Activated B cell treated with CpG ODN at 0.5 μM for 24 hours (primary cell): ENCODE measurements at regions of chr6 and their contacts with region 1.

Region 1: GRCh38 chr6:33147807-33148666 is 44.2 kb downstream of the COL11A2 start:
- DNase-seq: no peak
- ATAC-seq: no peak
- H3K4me3 Mint-ChIP-seq: no peak overlapping the region
- H3K27ac Mint-ChIP-seq: no peak overlapping the region
- H3K4me1 Mint-ChIP-seq: peaks cover 14% of the 10 kb centered on the region
- H3K27me3 Mint-ChIP-seq: peaks cover 6% of the 10 kb centered on the region
- CTCF ChIP-seq: peak; percentile 29

Region 2: DNA sequence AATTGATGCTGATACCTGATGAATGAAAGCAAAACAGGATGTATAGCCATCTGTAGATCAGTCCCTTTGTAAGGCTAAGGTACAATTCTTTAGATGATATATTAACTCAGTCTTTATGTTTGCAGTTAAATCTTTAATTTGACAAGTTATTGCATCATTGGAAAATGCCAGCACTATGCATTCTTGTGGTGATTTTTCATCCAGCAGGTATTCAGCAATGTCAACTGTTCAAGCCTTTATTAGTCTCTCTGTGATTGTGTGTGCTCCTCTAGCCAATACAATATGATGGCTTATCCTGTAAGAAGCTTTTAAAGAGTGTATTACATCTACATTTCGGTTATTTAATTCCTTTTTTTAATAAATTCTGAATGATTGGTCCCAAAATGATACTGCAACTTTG is 241.5 kb before region 1 on chr6:
- CTCF ChIA-PET with region 1: no interaction called
- POLR2A ChIA-PET with region 1: no interaction called
- intact Hi-C with region 1: no loop called
- DNase-seq: no peak
- ATAC-seq: no peak
- H3K4me3 Mint-ChIP-seq: no peak overlapping the region
- H3K27ac Mint-ChIP-seq: no peak overlapping the region
- H3K4me1 Mint-ChIP-seq: peaks cover 21% of the 10 kb centered on the region
- H3K27me3 Mint-ChIP-seq: no peaks in the 10 kb centered on the region
- CTCF ChIP-seq: no peak

Region 3: GRCh38 chr6:33000055-33000454 is 148.0 kb before region 1 on chr6:
- CTCF ChIA-PET with region 1: interaction called, 58 read pairs
- POLR2A ChIA-PET with region 1: interaction called, 4 read pairs
- intact Hi-C with region 1: loop called (anchors 1 kb)
- DNase-seq: no peak
- ATAC-seq: peak; percentile 92
- H3K4me3 Mint-ChIP-seq: peak overlapping the region; percentile 47
- H3K27ac Mint-ChIP-seq: peak overlapping the region; percentile 79
- H3K4me1 Mint-ChIP-seq: peaks cover 12% of the 10 kb centered on the region
- H3K27me3 Mint-ChIP-seq: no peaks in the 10 kb centered on the region
- CTCF ChIP-seq: no peak

Region 4: DNA sequence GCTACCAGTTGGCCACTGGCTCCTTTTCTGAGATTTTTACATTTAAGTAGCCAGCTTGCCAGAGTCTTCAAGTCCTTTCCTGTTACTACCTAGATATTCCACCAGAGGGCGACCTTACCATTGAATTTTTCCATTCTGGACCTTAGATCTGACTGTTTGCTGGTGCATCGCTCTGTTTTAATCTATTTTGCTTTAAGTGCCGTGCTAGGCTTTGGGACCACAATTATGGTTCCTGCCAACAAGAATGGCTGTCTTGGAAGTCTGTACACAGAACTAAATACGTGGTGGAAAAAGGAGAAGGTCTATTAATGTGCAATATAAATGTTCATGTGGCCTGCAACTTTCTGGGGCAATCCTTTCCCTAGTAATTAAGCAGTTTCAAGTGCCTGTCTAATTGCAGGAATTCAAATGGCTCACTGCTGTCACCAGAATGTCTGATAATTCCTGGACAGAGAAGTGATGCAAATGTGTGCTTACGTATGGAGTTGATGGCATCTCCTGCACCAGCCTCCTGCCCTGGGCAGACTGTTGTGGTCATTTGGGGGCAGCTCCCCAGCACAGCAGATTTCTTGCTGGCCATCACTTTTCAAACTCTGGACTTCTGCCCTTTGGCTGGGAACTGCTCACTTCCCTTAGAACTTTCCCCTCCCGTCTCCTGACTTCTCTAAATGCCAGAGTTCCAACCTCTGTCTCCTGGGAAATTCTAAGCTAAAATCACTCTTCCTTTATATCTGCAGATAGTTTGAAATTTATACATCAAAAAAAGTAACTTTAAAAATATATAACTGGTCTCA is 133.0 kb before region 1 on chr6:
- CTCF ChIA-PET with region 1: interaction called, 47 read pairs
- POLR2A ChIA-PET with region 1: interaction called, 4 read pairs
- intact Hi-C with region 1: loop called (anchors 1 kb)
- DNase-seq: no peak
- ATAC-seq: peak; percentile 34
- H3K4me3 Mint-ChIP-seq: peak overlapping the region; percentile 71
- H3K27ac Mint-ChIP-seq: peak overlapping the region; percentile 98
- H3K4me1 Mint-ChIP-seq: peaks cover 69% of the 10 kb centered on the region
- H3K27me3 Mint-ChIP-seq: no peaks in the 10 kb centered on the region
- CTCF ChIP-seq: no peak

Region 5: DNA sequence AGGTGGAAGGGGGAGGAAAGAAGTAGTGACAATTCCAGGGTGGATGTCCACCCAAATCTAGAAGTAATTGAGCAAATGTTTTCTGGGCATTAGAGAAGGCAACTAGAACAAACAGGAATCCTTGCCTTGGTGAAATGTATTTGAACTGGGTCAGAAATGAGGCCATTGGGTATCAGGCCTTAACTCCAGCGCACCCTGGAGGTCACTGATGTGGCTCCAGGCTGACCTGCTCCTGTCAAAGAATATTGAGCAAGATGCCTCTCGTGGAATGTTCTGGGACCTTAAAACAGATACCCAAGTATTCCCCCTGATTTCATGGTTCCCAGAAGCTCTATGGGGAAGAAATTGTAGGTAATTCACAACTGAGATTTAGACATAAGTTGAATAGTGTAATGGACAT is 65.3 kb before region 1 on chr6:
- CTCF ChIA-PET with region 1: interaction called, 3 read pairs
- POLR2A ChIA-PET with region 1: no interaction called
- intact Hi-C with region 1: loop called (anchors 5 kb)
- DNase-seq: no peak
- ATAC-seq: peak; percentile 54
- H3K4me3 Mint-ChIP-seq: peak overlapping the region; percentile 89
- H3K27ac Mint-ChIP-seq: peak overlapping the region; percentile 78
- H3K4me1 Mint-ChIP-seq: peaks cover 74% of the 10 kb centered on the region
- H3K27me3 Mint-ChIP-seq: no peaks in the 10 kb centered on the region
- CTCF ChIP-seq: no peak

Region 6: GRCh38 chr6:33118525-33119123 is 29.4 kb before region 1 on chr6:
- CTCF ChIA-PET with region 1: interaction called, 7 read pairs
- POLR2A ChIA-PET with region 1: no interaction called
- intact Hi-C with region 1: loop called (anchors 1 kb)
- DNase-seq: no peak
- ATAC-seq: peak; percentile 48
- H3K4me3 Mint-ChIP-seq: no peak overlapping the region
- H3K27ac Mint-ChIP-seq: no peak overlapping the region
- H3K4me1 Mint-ChIP-seq: peaks cover 51% of the 10 kb centered on the region
- H3K27me3 Mint-ChIP-seq: peaks cover 9% of the 10 kb centered on the region
- CTCF ChIP-seq: peak; percentile 14

Region 7: GRCh38 chr6:33126101-33126714 is 21.8 kb before region 1 on chr6:
- CTCF ChIA-PET with region 1: interaction called, 10 read pairs
- POLR2A ChIA-PET with region 1: no interaction called
- intact Hi-C with region 1: no loop called
- DNase-seq: peak; percentile 59
- ATAC-seq: peak; percentile 73
- H3K4me3 Mint-ChIP-seq: no peak overlapping the region
- H3K27ac Mint-ChIP-seq: no peak overlapping the region
- H3K4me1 Mint-ChIP-seq: peaks cover 4% of the 10 kb centered on the region
- H3K27me3 Mint-ChIP-seq: no peaks in the 10 kb centered on the region
- CTCF ChIP-seq: no peak

Region 8: GRCh38 chr6:33161354-33162331 is 13.6 kb after region 1 on chr6:
- CTCF ChIA-PET with region 1: interaction called, 11 read pairs
- POLR2A ChIA-PET with region 1: interaction called, 5 read pairs
- intact Hi-C with region 1: no loop called
- DNase-seq: peak; percentile 84
- ATAC-seq: peak; percentile 98
- H3K4me3 Mint-ChIP-seq: peak overlapping the region; percentile 92
- H3K27ac Mint-ChIP-seq: peak overlapping the region; percentile 65
- H3K4me1 Mint-ChIP-seq: peaks cover 13% of the 10 kb centered on the region
- H3K27me3 Mint-ChIP-seq: peaks cover 1% of the 10 kb centered on the region
- CTCF ChIP-seq: peak; percentile 47

Region 9: DNA sequence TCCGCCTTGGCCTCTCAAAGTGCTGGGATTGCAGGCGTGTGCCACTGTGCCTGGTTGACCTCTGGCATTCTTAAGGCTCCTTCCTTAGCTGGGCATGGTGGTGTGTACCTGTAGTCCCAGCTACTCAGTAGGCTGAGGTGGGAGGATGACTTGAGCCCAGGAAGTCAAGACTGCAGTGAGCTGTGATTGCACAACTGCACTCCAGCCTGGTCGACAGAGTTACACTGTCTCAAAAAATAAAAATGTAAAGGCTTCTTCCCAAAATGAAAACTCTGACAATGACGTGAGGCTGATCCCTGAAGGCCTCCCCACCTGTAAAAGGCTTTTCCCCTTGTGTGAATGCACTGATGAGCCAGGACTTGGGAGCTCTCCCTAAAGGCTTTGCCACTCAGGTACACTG is 368.7 kb after region 1 on chr6:
- CTCF ChIA-PET with region 1: no interaction called
- POLR2A ChIA-PET with region 1: no interaction called
- intact Hi-C with region 1: no loop called
- DNase-seq: no peak
- ATAC-seq: no peak
- H3K4me3 Mint-ChIP-seq: no peak overlapping the region
- H3K27ac Mint-ChIP-seq: no peak overlapping the region
- H3K4me1 Mint-ChIP-seq: no peaks in the 10 kb centered on the region
- H3K27me3 Mint-ChIP-seq: peaks cover 9% of the 10 kb centered on the region
- CTCF ChIP-seq: no peak